Breast epithelium (tissue), 4 donors: ENCODE measurements at regions of chr9 and their contacts with region 1.

Region 1: GRCh38 chr9:130701056-130702022 is 7.8 kb downstream of the EXOSC2 start:
- DNase-seq: peak in 1 of 2 donors; percentile 51
- H3K4me3 ChIP-seq: no peak overlapping the region
- H3K27ac ChIP-seq: no peak overlapping the region
- H3K4me1 ChIP-seq: no peaks in the 10 kb centered on the region
- H3K27me3 ChIP-seq: no peaks in the 10 kb centered on the region
- CTCF ChIP-seq: peak; percentile 61 to 77 (median 62)
- POLR2A ChIP-seq: no peak

Region 2: DNA sequence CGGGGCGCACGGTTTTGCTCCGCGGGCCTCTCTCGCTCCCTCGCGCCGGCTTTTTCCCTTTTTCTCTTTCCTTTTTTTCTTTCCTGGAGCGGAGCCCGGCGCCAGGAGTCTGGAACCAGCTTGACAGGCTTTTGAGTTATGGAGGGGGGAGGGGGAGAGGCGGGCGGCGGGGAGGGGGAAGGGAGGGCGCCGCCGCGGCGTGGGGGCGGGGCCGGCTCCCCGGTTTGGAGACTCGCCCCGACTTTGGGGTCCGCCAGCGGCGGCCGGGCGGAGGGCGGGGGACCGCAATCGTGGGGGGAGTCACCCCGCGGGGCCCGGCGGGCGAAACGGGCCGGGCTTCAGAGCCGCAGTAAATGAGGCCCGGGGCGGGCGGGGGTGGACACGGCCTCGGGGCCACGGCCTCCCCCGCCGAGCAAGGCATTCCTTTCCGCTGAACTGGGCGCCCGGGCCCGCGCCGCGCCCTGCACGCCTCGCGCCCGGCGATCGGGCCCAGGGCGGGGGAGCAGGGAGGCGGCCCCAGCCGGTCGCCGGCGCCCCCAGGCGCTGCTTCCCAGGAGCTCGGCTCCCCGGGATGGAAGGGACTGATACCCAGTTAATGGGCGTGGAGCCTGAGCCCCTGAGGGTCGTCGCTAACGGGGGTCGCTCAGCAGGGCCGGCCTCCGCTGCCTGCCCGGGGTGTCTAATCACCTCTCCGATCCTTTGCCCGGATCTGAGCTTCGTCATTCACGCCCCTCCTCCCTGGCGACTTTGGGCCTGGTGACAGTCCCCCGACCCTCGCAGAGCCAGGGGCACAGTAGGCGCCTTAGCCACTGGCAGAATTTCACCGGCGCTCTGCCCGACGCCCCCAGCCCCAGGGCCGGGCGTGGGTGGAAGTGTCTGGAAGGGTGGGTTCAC is 1218.6 kb before region 1 on chr9:
- intact Hi-C with region 1: no loop called
- DNase-seq: peak; percentile 87 to 92
- H3K4me3 ChIP-seq: peak overlapping the region; percentile 52 to 76 (median 66)
- H3K27ac ChIP-seq: peak overlapping the region; percentile 100
- H3K4me1 ChIP-seq: peaks cover 20 to 40% of the 10 kb centered on the region in 2 donors
- H3K27me3 ChIP-seq: no peaks in the 10 kb centered on the region
- CTCF ChIP-seq: no peak
- POLR2A ChIP-seq: no peak

Region 3: DNA sequence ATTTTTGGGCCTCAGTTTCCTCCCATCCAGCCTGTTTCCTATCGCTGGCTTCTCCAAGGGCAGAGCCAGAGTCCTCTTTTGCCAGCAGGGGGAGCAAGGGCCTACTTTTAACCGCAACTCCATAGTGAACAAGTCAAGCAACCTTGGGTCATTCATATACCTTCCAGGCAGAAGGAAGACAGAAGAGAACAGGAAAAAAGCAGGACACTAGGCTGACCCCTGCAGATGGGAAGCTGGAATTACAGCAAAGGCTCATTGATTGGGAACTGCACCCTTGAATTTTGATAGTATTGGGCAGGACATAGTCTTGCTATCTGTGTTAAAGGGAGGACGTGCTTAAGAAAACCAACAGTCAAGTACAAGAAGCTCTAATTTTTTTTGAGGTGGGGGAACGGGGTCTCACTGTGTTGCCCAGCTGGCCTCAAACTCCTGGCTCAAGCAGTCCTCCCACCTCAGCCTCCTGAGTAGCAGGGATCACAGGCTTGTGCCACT is 165.2 kb after region 1 on chr9:
- intact Hi-C with region 1: loop called (anchors 10 kb)
- DNase-seq: peak; percentile 72 to 74
- H3K4me3 ChIP-seq: no peak overlapping the region
- H3K27ac ChIP-seq: no peak overlapping the region
- H3K4me1 ChIP-seq: peaks cover 0 to 5% of the 10 kb centered on the region in 2 donors
- H3K27me3 ChIP-seq: no peaks in the 10 kb centered on the region
- CTCF ChIP-seq: peak; percentile 73 to 96 (median 87)
- POLR2A ChIP-seq: no peak